Mammary epithelial cell (primary cell): ENCODE measurements at regions of chr5 and their contacts with region 1.

Region 1: DNA sequence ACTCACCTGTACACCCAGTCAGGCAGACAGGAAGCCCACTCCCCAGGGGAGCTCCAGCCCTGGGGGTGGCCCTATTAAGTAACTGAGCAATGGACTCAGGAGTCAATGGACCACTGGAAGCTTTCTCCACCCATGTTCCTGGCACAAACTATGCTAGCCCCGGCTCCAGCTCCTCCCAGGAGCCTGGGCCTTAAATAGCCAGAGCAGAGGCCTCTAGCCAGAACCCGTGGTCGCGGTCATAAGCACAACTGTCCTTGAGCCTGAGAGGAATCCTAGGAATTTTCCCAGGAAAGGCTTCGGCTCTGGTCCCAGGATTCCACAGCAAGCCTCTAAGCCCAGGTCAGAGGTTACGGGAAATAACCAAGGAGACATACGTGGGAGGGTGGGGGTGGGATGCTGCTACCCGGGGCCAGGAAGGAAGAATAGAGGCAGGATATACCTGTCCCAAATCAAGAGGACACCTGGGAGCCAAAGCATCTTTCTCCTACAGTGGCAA is 5.5 kb downstream of the SEPTIN8 start:
- DNase-seq: no peak
- H3K4me3 ChIP-seq: no peak overlapping the region
- H3K27ac ChIP-seq: no peak overlapping the region
- H3K4me1 ChIP-seq: peaks cover 21% of the 10 kb centered on the region
- H3K27me3 ChIP-seq: no peaks in the 10 kb centered on the region
- CTCF ChIP-seq: no peak

Region 2: DNA sequence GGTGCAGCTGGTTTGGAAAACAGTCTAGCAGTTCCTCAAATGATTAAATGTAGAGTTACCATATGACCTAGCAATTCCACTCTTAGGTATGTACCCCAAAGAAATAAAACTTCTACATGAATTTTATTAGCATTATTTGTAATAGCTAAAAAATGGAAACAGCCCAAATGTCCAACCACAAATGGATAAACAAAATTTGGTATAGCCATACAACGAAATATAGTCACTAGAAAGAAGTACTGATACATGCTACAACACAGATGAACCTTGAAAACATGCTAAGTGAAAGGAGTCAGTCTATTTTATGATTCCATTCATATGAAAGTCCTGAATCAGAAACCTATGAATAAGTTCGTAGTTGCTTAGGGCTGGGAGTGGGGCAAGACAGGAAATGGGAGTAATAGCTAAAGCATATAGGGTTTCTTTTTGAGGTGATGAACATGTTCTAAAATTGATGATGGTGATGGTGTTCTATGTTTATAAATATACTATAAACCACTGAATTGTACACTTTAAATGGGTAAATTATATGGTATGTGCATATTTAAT is 88.4 kb after region 1 on chr5:
- CTCF ChIA-PET with region 1: no interaction called
- dilution Hi-C with region 1: loop called (anchors 5 kb)
- in situ Hi-C with region 1: no loop called
- intact Hi-C with region 1: no loop called
- DNase-seq: no peak
- H3K4me3 ChIP-seq: no peak overlapping the region
- H3K27ac ChIP-seq: no peak overlapping the region
- H3K4me1 ChIP-seq: no peaks in the 10 kb centered on the region
- H3K27me3 ChIP-seq: no peaks in the 10 kb centered on the region
- CTCF ChIP-seq: no peak

Region 3: GRCh38 chr5:133189911-133190310 is 418.4 kb after region 1 on chr5:
- CTCF ChIA-PET with region 1: no interaction called
- dilution Hi-C with region 1: no loop called
- in situ Hi-C with region 1: no loop called
- intact Hi-C with region 1: loop called (anchors 5 kb)
- DNase-seq: no peak
- H3K4me3 ChIP-seq: no peak overlapping the region
- H3K27ac ChIP-seq: no peak overlapping the region
- H3K4me1 ChIP-seq: peaks cover 6% of the 10 kb centered on the region
- H3K27me3 ChIP-seq: no peaks in the 10 kb centered on the region
- CTCF ChIP-seq: no peak